Activated CD4-positive, alpha-beta T cell treated with anti-CD3 and anti-CD28 coated beads, Interleukin-2, amount 10 ng/mL, durations not matched to agents 24 days and 14 days (primary cell): ENCODE measurements at regions of chr16 and their contacts with region 1.

Region 1: DNA sequence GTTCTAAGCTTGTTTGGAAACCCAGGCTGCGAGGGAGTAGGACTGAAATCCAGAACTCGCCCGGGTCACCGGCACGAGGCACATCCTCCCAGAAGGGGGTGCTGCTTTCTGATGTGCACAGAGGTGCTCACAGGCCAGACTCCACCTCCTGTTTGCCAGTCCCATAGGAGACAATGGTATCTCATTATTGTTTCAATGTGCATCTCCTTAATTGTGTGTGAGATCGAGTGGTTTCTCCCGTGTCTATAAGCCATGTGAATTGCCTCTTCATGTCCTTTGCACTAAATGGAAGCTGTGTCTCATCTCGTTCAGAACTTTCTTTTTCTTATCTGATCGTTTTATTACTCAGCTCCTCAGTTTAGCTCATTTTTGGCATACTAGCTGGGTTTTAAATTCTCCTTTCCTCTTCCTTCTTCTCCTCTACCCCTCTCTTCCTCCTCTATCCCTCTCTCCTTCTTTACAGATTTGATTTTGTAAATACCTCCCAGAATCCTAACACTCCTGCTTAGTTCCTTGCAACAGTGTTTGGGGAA is 32.1 kb upstream of the PRKCB start:
- DNase-seq: peak; percentile 92
- H3K4me3 Mint-ChIP-seq: peak overlapping the region; percentile 29
- H3K27ac Mint-ChIP-seq: peak overlapping the region; percentile 16
- H3K4me1 Mint-ChIP-seq: peaks cover 18% of the 10 kb centered on the region
- H3K27me3 Mint-ChIP-seq: peaks cover 13% of the 10 kb centered on the region

Region 2: DNA sequence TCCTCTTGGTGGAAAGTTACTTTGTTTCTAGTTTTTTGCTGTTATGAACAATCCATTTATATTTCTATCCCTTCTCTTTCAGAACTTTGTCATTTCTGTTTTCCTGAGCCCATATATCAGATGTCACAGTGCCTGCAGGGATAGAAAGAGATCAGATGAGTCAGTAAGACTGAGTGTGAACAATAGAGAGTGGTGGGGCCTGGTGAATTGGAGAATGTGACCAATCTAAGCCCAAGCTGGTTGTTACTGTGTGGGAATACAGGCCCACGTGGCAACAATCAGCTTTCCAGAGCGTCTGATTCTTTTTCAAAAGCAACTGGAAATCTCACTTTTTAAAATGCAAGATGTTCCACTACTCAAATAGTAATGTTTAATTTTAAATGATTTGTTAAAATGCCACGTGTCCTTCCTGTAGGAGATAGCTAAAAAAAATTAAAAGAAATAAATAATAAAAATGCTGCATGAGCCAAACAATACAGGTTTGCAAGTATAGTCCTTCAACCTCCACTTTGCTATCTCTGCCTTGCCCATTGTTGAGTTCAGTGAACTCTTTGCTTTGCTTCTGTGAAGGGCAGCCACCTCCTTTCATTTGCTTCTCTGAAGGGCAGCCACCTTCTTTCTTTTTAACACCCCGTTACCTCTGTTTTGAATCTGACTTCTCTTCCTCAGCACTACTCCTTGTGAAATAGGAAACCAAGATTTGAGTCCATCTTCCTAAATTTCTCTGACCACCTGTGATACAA is 152.8 kb before region 1 on chr16:
- intact Hi-C with region 1: no loop called
- DNase-seq: no peak
- H3K4me3 Mint-ChIP-seq: no peak overlapping the region
- H3K27ac Mint-ChIP-seq: peak overlapping the region; percentile 31
- H3K4me1 Mint-ChIP-seq: peaks cover 38% of the 10 kb centered on the region
- H3K27me3 Mint-ChIP-seq: no peaks in the 10 kb centered on the region

Region 3: GRCh38 chr16:23826528-23827045 is 22.9 kb after region 1 on chr16:
- intact Hi-C with region 1: loop called (anchors 1 kb)
- DNase-seq: peak; percentile 77
- H3K4me3 Mint-ChIP-seq: peak overlapping the region; percentile 41
- H3K27ac Mint-ChIP-seq: peak overlapping the region; percentile 52
- H3K4me1 Mint-ChIP-seq: peaks cover 26% of the 10 kb centered on the region
- H3K27me3 Mint-ChIP-seq: no peaks in the 10 kb centered on the region

Region 4: DNA sequence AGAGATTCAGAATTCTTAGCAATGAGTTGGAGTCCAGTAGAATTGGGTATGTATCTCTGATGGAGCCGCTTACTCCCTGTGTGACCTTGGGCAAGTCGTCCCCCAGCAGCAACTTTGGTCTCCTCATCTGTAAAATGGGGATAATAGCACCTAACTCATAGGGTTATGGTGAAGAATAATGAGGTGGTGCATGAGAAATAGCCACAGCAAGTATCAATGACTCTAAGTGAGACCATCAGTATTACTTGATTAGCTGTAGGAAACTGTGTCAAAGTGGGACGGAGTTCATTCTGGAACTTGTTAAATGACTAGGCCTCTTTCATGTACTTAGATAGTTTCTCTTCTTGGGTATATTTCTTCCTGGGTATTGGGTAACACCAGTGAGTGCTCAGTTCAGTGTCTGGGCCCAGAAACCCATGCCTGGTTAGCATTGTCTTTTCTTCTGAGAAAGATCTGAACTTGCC is 38.5 kb after region 1 on chr16:
- intact Hi-C with region 1: loop called (anchors 5 kb)
- DNase-seq: peak; percentile 73
- H3K4me3 Mint-ChIP-seq: peak overlapping the region; percentile 28
- H3K27ac Mint-ChIP-seq: peak overlapping the region; percentile 87
- H3K4me1 Mint-ChIP-seq: peaks cover 70% of the 10 kb centered on the region
- H3K27me3 Mint-ChIP-seq: no peaks in the 10 kb centered on the region

Region 5: DNA sequence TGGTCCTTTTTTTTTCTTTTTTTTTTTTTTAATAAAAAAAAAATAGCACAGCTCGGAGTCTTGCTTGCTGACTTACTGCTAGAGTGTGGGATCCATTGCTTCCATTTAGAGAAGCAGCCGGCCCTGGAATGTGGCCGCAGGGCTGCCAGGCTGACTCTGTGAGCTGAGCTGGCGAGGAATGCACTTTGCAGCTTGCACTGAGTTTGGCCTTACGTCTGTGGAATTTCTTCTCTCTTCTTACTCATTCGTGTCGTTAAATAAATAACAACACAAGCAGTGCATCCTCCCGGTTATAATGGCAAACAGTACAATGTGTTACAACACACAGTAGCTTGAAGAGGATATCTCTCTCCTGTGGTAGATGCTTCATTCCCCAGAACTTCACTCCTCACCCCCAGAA is 101.4 kb after region 1 on chr16:
- intact Hi-C with region 1: no loop called
- DNase-seq: no peak
- H3K4me3 Mint-ChIP-seq: no peak overlapping the region
- H3K27ac Mint-ChIP-seq: no peak overlapping the region
- H3K4me1 Mint-ChIP-seq: peaks cover 40% of the 10 kb centered on the region
- H3K27me3 Mint-ChIP-seq: no peaks in the 10 kb centered on the region

Region 6: GRCh38 chr16:23959072-23959751 is 155.6 kb after region 1 on chr16:
- intact Hi-C with region 1: loop called (anchors 1 kb)
- DNase-seq: no peak
- H3K4me3 Mint-ChIP-seq: peak overlapping the region; percentile 59
- H3K27ac Mint-ChIP-seq: peak overlapping the region; percentile 79
- H3K4me1 Mint-ChIP-seq: peaks cover 55% of the 10 kb centered on the region
- H3K27me3 Mint-ChIP-seq: no peaks in the 10 kb centered on the region

Region 7: GRCh38 chr16:24010440-24011089 is 206.9 kb after region 1 on chr16:
- intact Hi-C with region 1: loop called (anchors 1 kb)
- DNase-seq: peak; percentile 93
- H3K4me3 Mint-ChIP-seq: no peak overlapping the region
- H3K27ac Mint-ChIP-seq: no peak overlapping the region
- H3K4me1 Mint-ChIP-seq: peaks cover 54% of the 10 kb centered on the region
- H3K27me3 Mint-ChIP-seq: no peaks in the 10 kb centered on the region

Region 8: DNA sequence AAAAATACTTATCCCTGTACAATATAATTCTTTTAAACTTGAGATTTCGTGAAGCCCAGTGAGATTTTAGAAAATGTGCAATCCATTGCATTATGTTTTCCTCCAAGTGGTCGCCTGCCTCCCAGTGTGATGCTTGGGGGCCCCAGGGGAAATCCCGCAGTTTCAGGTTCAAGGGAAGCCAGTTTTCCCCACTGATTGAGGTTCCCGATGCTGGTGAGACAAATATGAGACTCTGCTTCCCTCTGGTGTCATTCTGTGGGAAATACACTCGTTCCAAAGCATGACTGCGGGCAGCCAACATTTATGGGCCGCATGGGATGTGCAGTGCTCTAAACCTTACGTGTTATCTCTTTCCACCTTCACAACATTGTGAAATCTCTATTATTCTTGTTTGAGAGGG is 233.0 kb after region 1 on chr16:
- intact Hi-C with region 1: loop called (anchors 1 kb)
- DNase-seq: peak; percentile 81
- H3K4me3 Mint-ChIP-seq: peak overlapping the region; percentile 31
- H3K27ac Mint-ChIP-seq: no peak overlapping the region
- H3K4me1 Mint-ChIP-seq: peaks cover 29% of the 10 kb centered on the region
- H3K27me3 Mint-ChIP-seq: no peaks in the 10 kb centered on the region

Region 9: DNA sequence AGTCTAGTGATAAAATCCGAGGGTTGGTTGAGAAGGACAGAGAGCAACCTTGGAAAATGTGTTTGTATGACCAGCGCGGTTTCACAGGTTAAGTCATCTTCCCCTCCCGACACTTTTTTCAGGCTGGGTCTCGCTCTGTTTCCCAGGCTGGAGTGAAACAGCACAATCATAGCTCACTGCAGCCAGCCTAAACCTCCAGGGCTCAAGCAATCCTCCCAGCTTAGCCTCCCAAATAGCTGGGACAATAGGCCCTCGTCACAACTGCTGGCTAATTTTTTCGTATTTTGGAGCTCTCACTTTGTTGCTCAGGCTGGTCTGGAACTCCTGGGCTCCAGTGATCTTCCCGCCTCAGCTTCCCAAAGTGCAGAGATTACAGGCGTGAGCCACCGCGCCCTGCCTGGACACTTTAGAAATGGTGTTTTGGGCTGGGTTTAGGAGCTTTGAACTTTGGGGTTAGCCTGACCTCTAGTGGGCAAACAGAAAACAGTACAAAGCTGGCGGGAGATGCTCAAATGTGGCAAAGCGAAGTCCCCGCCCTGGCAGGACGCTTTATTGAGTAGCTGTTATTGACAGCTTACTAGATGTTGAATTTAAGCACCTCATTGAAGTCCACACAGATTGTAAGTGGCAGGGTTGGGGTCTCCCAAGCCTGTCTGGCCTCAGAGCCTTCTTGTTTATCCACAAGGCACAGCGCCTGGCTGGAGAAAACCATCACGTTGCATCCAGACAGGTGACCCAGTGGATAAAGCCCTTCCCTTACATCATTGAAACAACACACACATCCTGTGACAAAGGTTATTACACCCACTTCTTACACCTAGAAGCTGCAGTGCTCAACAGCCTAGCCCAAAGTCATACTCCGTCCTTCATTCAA is 701.1 kb after region 1 on chr16:
- intact Hi-C with region 1: loop called (anchors 10 kb)
- DNase-seq: peak; percentile 87
- H3K4me3 Mint-ChIP-seq: no peak overlapping the region
- H3K27ac Mint-ChIP-seq: no peak overlapping the region
- H3K4me1 Mint-ChIP-seq: peaks cover 2% of the 10 kb centered on the region
- H3K27me3 Mint-ChIP-seq: peaks cover 14% of the 10 kb centered on the region

Region 10: GRCh38 chr16:25189305-25189704 is 1385.6 kb after region 1 on chr16:
- intact Hi-C with region 1: no loop called
- DNase-seq: no peak
- H3K4me3 Mint-ChIP-seq: no peak overlapping the region
- H3K27ac Mint-ChIP-seq: no peak overlapping the region
- H3K4me1 Mint-ChIP-seq: no peaks in the 10 kb centered on the region
- H3K27me3 Mint-ChIP-seq: no peaks in the 10 kb centered on the region